AG04450 (cell line): ENCODE measurements at regions of chr16 and their contacts with region 1.

Region 1: DNA sequence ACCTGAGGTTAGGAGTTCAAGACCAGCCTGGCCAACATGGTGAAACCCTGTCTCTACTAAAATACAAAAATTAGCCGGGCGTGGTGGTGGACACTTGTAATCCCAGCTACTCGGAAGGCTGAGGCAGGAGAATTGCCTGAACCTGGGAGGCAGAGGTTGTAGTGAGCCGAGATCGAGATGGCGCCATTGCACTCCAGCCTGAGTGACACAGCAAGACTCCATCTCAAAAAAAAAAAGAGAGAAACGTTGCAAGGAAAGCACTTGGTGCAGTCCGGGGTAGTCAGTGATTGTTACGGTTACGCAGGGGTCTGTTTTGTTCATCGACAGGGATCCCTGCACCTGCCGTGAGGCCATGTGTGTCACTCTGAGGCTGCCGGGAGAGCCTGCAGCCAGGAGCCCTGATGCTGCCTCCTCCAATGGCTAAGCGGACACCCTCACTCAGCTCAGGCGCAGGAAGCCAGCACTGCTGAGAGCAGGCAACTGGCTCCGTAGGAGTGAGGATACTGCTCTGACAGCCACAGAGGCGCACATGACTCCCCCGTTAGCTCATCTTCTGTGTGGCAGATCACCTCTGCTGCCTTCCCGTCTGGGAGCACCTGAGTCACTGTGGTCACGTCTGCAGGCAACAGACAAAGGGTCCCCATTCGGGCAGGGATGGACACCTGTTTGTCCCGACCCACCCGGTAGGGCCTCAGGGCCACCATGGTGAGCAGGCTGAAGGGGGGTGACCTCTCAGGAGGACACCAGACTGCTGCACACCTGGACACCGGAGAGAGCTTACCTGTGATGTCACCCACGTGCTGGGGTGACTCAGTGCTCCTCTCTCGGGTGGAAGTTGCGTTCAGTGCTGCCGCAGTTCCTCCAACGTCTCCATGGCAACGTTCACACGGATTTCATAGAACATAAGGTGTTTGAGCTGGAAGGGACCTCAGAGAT is 5.2 kb upstream of the RAB26 start:
- DNase-seq: no peak
- H3K4me3 ChIP-seq: no peak overlapping the region
- H3K27ac ChIP-seq: no peak overlapping the region
- H3K27me3 ChIP-seq: no peaks in the 10 kb centered on the region
- CTCF ChIP-seq: no peak

Region 2: GRCh38 chr16:1983544-1984346 is 159.5 kb before region 1 on chr16 and contains the start of gene GFER:
- CTCF ChIA-PET with region 1: interaction called, 17 read pairs
- POLR2A ChIA-PET with region 1: interaction called, 4 read pairs
- DNase-seq: peak; percentile 72
- H3K4me3 ChIP-seq: peak within 1 kb of the TSS; percentile 74
- H3K27ac ChIP-seq: no peak within 1 kb of the TSS
- H3K27me3 ChIP-seq: peaks cover 36% of the 10 kb centered on the region
- CTCF ChIP-seq: peak; percentile 44
- polyA plus RNA-seq, gene GFER: 15.8 and 19.5 TPM in 2 replicates

Region 3: DNA sequence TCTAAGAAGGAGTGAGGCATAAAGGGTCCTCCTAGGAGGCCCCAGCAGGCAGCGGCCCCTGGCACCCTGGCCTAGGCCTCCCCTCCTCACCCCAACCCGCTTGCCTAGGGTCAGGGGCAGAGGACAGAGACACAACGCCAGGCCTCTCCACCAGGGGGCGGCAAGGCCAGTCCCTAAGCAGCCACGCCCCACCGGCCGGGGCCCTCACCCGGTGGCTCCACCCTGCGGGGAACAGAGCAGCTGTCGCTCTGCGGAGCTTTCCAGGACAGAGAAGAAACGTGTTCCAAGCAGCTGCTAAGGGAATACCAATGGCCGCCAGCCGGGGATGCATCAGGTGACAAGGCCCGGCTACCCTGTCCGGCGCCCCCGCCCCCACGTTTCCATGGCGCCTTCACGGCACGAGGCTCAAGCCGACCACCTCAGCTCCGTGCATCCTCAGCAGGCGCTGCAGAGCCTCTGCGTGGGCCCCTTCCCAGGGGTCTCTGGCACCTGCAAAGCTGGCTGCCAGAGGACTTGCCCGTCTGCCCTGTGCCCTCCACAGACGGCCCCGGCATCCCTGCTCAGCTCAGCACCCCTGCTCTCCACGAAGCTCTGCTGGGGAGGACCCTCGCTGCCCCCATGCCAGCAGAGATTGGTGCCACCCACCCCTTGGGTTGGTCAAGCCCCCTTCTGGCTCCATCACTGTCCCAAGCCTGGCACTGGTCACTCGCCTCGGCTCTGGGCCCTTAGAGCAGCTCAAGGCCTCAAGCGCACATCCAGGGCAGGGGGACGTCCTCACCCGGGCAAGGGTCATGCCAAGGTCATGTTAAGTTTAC is 139.2 kb before region 1 on chr16:
- CTCF ChIA-PET with region 1: interaction called, 79 read pairs
- POLR2A ChIA-PET with region 1: interaction called, 4 read pairs
- DNase-seq: peak; percentile 51
- H3K4me3 ChIP-seq: 0 out of 2 replicates have a peak overlapping the region, but pooled peaks have one; percentile 13
- H3K27ac ChIP-seq: no peak overlapping the region
- H3K27me3 ChIP-seq: no peaks in the 10 kb centered on the region
- CTCF ChIP-seq: peak; percentile 94

Region 4: DNA sequence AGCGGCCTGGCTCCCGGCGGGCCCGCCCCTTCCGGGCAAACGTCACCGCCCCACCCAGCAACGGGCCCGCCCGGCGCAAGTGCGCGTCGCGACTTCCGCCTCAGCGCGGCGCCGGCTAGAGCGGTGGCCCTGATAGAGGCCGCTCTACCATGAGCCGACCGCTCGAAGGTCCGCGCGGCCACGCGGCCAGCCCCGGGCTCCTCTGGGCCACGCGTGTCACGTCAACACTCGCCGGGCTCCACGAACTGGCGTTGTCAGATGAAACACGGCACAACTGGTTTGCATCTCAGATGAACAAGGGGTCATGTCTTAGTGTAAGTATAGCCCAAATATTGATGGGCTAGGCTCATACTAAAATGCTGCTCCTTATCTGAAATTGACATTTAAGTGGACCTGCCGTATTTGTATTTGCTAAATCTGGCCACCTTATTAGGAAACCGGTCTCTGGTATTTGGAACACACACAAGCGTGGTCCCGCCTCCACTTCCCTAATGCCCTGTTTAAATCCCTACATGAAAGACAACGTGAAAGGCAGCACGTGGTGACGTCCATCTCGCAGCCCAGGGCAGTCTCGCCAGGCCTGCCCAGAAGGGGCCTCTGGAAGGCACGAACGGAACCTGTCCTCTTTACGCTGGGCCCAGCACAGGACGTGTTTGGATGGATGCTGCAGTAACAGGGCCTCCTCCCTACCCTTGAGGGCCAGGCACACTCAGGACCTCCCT is 133.3 kb before region 1 on chr16 and contains the start of gene ZNF598:
- CTCF ChIA-PET with region 1: interaction called, 79 read pairs
- POLR2A ChIA-PET with region 1: no interaction called
- DNase-seq: no peak
- H3K4me3 ChIP-seq: peak within 1 kb of the TSS; percentile 64
- H3K27ac ChIP-seq: peak within 1 kb of the TSS; percentile 70
- H3K27me3 ChIP-seq: no peaks in the 10 kb centered on the region
- CTCF ChIP-seq: no peak
- polyA plus RNA-seq, gene ZNF598: 8.2 and 10.7 TPM in 2 replicates

Region 5: DNA sequence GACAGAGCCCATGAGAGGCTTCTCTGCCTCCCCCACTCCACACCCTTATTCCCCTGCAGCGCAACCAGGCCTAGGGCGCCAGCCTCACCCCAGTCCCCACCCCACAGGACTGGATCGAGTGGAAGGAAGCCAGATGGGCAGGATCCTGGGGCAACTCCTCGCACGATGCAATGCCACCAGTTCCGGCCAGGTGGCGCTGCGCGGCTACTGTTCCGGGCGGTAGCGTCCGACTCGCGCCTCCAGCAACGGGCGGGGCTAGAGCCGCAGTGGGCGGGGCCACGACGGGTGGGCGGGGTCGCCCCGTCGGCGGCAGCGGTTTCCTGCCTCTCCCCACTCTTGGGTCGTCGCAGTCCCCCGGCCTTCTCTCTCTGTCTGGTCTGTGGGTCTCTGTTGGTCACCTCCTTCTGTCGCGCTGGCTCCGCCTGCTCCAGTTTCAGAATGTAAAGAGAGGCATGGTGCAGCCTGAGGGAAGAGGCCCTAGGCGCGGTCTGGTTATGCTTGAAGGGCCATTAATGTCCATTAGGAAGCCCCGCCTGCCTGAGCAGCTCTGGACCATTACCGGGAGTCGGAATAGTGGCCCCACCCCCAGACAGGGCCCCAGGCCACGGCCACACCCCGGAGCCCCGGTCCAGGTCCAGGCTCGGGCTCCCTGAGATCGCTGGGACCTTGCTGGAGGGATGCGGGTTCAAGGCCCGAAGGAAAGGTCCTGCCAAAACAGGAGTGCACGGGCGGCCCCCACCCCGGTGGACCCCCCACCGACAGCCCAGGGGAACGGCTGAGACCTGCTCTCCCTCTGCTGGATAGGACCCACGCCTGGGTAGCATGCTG is 119.9 kb before region 1 on chr16:
- CTCF ChIA-PET with region 1: interaction called, 87 read pairs
- POLR2A ChIA-PET with region 1: interaction called, 6 read pairs
- DNase-seq: peak; percentile 66
- H3K4me3 ChIP-seq: peak overlapping the region; percentile 40
- H3K27ac ChIP-seq: peak overlapping the region; percentile 21
- H3K27me3 ChIP-seq: peaks cover 5% of the 10 kb centered on the region
- CTCF ChIP-seq: peak; percentile 87

Region 6: DNA sequence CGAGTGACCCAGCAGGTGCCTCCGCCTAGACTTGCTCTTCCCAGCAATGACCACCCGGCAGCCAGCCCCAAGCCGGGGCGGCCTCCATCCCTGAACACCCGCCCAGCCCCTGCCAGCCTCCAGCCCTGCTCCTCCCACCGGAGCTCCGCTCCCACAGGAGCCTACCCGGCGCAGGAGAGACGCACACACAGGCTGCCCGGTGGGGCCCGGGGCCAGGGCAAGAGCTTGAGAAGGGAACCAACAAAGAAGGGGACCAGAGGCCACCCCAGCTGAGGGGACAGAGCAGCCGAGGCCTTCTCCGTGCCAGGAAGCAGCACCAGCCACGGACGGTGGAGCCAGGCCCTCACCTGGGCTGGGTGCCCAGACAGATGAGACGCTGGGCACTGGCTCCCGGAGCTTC is 21.4 kb before region 1 on chr16:
- CTCF ChIA-PET with region 1: interaction called, 20 read pairs
- POLR2A ChIA-PET with region 1: interaction called, 3 read pairs
- DNase-seq: no peak
- H3K4me3 ChIP-seq: no peak overlapping the region
- H3K27ac ChIP-seq: no peak overlapping the region
- H3K27me3 ChIP-seq: no peaks in the 10 kb centered on the region
- CTCF ChIP-seq: no peak

Region 7: GRCh38 chr16:2459647-2460390 is 316.6 kb after region 1 on chr16 and contains the start of gene TEDC2:
- CTCF ChIA-PET with region 1: no interaction called
- POLR2A ChIA-PET with region 1: no interaction called
- DNase-seq: peak; percentile 74
- H3K4me3 ChIP-seq: peak within 1 kb of the TSS; percentile 70
- H3K27ac ChIP-seq: peak within 1 kb of the TSS; percentile 2
- H3K27me3 ChIP-seq: no peaks in the 10 kb centered on the region
- CTCF ChIP-seq: no peak
- polyA plus RNA-seq, gene TEDC2: 1.8 TPM in 2 replicates